WTC11 (cell line): ENCODE measurements at regions of chr15 and their contacts with region 1.

Region 1: DNA sequence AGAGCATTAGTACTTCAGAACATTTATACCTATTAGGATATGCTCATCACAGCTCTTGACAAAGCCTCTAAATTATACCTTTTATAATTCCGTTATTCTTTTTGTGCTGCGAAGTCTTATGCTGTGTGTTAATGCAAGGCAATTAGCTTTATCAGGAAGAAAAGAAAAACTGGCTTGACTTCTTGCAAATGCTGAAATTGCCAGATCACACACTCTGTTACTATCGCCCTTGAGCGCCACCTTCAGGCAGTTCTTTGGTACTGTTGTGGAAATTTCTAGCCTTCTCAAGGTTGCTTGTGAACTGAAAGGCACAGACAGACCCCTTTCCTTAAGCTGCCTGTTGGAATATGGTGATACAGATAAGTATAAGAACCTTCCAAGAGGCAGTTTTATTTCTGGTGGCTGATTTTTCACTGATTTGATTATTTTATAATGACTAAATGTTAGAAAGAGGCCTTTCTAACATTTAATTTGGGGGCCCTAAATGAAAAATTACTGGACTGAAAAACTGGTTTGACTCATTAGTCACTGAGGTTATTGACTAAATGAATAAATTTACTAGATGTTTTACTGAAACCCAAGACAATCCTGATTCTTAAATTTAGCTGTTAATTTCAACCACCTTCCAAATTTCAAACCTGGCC is 126.2 kb upstream of the RASGRP1 start:
- DNase-seq: peak; percentile 76
- ATAC-seq: peak; percentile 85
- H3K4me3 Mint-ChIP-seq: no peak overlapping the region
- H3K27ac Mint-ChIP-seq: no peak overlapping the region
- H3K4me1 Mint-ChIP-seq: peaks cover 15% of the 10 kb centered on the region
- H3K27me3 Mint-ChIP-seq: no peaks in the 10 kb centered on the region
- CTCF ChIP-seq: peak; percentile 78

Region 2: GRCh38 chr15:38453971-38454695 is 236.7 kb before region 1 on chr15 and contains the start of gene FAM98B:
- CTCF ChIA-PET with region 1: interaction called, 12 read pairs
- POLR2A ChIA-PET with region 1: no interaction called
- DNase-seq: peak; percentile 92
- ATAC-seq: peak; percentile 96
- H3K4me3 Mint-ChIP-seq: peak within 1 kb of the TSS; percentile 93
- H3K27ac Mint-ChIP-seq: peak within 1 kb of the TSS; percentile 96
- H3K4me1 Mint-ChIP-seq: peaks cover 13% of the 10 kb centered on the region
- H3K27me3 Mint-ChIP-seq: no peaks in the 10 kb centered on the region; the same call in 1 of the 2 replicates
- CTCF ChIP-seq: no peak
- total RNA-seq, gene FAM98B: 38.1 to 46.6 TPM (median 38.5 TPM) in 3 replicates

Region 3: GRCh38 chr15:38671675-38672254 is 19.0 kb before region 1 on chr15:
- CTCF ChIA-PET with region 1: interaction called, 28 read pairs
- POLR2A ChIA-PET with region 1: no interaction called
- DNase-seq: no peak
- ATAC-seq: peak; percentile 47
- H3K4me3 Mint-ChIP-seq: no peak overlapping the region
- H3K27ac Mint-ChIP-seq: no peak overlapping the region
- H3K4me1 Mint-ChIP-seq: peaks cover 10% of the 10 kb centered on the region; the same call in 1 of the 2 replicates
- H3K27me3 Mint-ChIP-seq: no peaks in the 10 kb centered on the region; the same call in 1 of the 2 replicates
- CTCF ChIP-seq: no peak